ENCODE measurements at regions of chr1 and their contacts with region 1.

Region 1: GRCh38 chr1:32291708-32292492 is at the start of gene HDAC1:
- DNase-seq: peak; percentile 99
- ATAC-seq: peak; percentile 98
- H3K4me3 Mint-ChIP-seq: peak within 1 kb of the TSS; percentile 100
- H3K27ac Mint-ChIP-seq: peak within 1 kb of the TSS; percentile 99
- H3K4me1 Mint-ChIP-seq: peaks cover 43% of the 10 kb centered on the region
- H3K27me3 Mint-ChIP-seq: no peaks in the 10 kb centered on the region
- total RNA-seq, gene HDAC1: 132 to 146 TPM

Region 2: GRCh38 chr1:32273388-32274208 is 18.3 kb before region 1 on chr1:
- CTCF ChIA-PET with region 1: interaction called, 4 read pairs
- POLR2A ChIA-PET with region 1: no interaction called
- intact Hi-C with region 1: loop called in 1 of 2 experiments (anchors 1 kb)
- DNase-seq: peak; percentile 91
- ATAC-seq: peak; percentile 93
- H3K4me3 Mint-ChIP-seq: peak overlapping the region; percentile 62
- H3K27ac Mint-ChIP-seq: peak overlapping the region; percentile 94
- H3K4me1 Mint-ChIP-seq: peaks cover 58% of the 10 kb centered on the region
- H3K27me3 Mint-ChIP-seq: no peaks in the 10 kb centered on the region

Region 3: DNA sequence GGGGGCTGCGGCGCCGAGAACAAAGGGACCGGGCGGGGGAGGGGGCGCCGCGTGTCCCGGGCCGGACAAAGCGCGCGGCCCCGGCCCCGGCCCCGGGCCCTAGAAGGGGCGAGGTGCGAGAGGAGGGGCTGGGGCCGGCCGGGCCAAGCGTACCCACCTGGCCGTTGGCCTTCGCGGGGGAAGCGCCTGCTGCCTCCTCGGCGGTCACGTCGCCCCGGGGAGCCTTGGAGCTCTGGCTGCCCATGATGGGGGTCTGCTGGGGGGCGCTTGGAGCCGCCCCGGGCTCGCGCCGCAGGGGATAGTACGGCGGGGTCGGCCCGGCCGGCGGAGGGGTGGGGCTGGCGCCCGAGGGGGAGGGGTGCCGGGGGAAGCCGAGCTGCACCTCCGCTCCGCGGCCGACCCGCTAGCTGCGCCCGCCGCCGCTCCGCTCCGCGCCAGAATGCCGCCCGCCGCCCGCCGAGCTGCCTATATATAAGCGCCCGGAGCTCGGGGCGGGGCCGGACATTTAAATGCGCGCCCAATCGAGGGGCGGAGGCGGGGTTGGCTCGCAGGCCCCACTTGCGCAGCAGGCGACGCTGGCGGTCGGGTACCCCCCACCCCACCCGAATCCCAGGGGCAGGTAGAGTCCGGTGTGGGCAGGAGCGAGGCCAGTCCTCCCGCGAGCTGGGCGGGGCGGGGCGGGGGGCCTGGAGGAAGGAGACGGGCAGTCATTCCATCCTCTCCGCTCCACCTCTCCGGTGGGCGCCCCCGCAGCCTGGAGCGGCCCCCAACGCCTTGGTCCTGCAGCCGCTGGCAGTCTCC is 44.1 kb after region 1 on chr1 and contains the start of gene MARCKSL1:
- CTCF ChIA-PET with region 1: no interaction called
- POLR2A ChIA-PET with region 1: interaction called, 6 read pairs
- intact Hi-C with region 1: loop called (anchors 1 to 5 kb)
- DNase-seq: peak; percentile 88
- ATAC-seq: peak; percentile 50
- H3K4me3 Mint-ChIP-seq: peak within 1 kb of the TSS; percentile 77
- H3K27ac Mint-ChIP-seq: peak within 1 kb of the TSS; percentile 76
- H3K4me1 Mint-ChIP-seq: peaks cover 52% of the 10 kb centered on the region
- H3K27me3 Mint-ChIP-seq: no peaks in the 10 kb centered on the region
- total RNA-seq, gene MARCKSL1: 27.0 to 29.3 TPM

Measured in activated CD4-positive, alpha-beta T cell treated with anti-CD3 and anti-CD28 coated beads for 36 hours (primary cell).